ENCODE measurements at regions of chr3 and their contacts with region 1.

Region 1: GRCh38 chr3:11379233-11379823 is 107.1 kb downstream of the ATG7 start:
- DNase-seq: no peak
- H3K4me3 ChIP-seq: no peak overlapping the region
- H3K27ac ChIP-seq: peak overlapping the region in 1 of 2 donors; percentile 43
- H3K4me1 ChIP-seq: peaks cover 8% of the 10 kb centered on the region
- H3K27me3 ChIP-seq: no peaks in the 10 kb centered on the region
- CTCF ChIP-seq: peak; percentile 46 to 66 (median 63)
- POLR2A ChIP-seq: no peak

Region 2: GRCh38 chr3:11651900-11652299 is 272.6 kb after region 1 on chr3:
- intact Hi-C with region 1: loop called (anchors 5 kb)
- DNase-seq: no peak
- H3K4me3 ChIP-seq: no peak overlapping the region
- H3K27ac ChIP-seq: no peak overlapping the region
- H3K4me1 ChIP-seq: no peaks in the 10 kb centered on the region
- H3K27me3 ChIP-seq: no peaks in the 10 kb centered on the region
- CTCF ChIP-seq: peak; percentile 20 to 60 (median 48)
- POLR2A ChIP-seq: no peak

Region 3: GRCh38 chr3:11803977-11804892 is 424.9 kb after region 1 on chr3:
- intact Hi-C with region 1: loop called (anchors 10 kb)
- DNase-seq: peak; percentile 64
- H3K4me3 ChIP-seq: no peak overlapping the region
- H3K27ac ChIP-seq: no peak overlapping the region
- H3K4me1 ChIP-seq: no peaks in the 10 kb centered on the region
- H3K27me3 ChIP-seq: no peaks in the 10 kb centered on the region
- CTCF ChIP-seq: peak; percentile 53 to 58 (median 56)
- POLR2A ChIP-seq: no peak

Measured in testis (tissue), 5 donors.